ENCODE measurements at regions of chr4 and their contacts with region 1.

Region 1: DNA sequence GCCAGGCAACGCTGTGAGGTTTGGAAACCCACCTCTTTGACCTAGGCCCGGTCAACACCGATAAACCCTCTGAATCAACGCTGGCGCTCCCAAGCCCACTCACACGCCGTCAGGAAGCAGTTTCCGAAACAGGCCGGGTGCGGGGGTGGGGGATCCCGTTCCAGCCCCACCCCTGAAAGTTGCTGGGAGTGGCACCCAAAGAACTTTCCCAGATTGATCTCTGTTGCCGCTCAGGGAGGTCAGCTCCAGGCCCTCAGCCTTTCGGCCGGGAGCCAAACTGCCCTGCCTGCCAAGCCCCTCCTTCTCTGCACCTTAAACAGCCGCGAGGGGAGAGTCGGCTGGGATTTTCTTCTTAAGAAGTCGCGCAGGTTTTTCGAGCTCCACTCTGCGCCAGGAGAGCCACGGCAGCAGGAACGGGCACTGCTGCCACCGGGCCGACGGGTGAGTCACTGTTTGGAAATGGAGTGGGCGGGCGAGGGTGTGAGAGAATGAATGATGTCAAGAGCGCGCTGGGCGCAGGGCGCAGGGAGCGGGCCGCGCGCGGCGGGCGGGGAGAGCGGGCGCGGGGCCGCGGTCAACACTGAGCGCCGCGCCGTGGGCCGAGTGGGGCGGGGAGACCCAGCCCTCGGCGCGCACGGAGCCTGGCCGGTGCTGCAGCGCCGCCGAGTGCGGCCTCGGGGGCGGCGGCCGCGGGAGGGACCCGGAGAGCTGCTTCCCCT is at the start of gene SGMS2:
- DNase-seq: peak; percentile 90
- H3K4me3 ChIP-seq: peak within 1 kb of the TSS; percentile 74 to 89 (median 78)
- H3K27ac ChIP-seq: peak within 1 kb of the TSS; percentile 96 to 98 (median 96)
- H3K4me1 ChIP-seq: peaks cover 7 to 34% (median 21%) of the 10 kb centered on the region in 4 donors
- H3K27me3 ChIP-seq: no peaks in the 10 kb centered on the region
- CTCF ChIP-seq: no peak
- EP300 ChIP-seq: no peak
- POLR2A ChIP-seq: peak; percentile 88
- total RNA-seq, gene SGMS2: 75.8 to 203 (median 122) TPM

Region 2: GRCh38 chr4:107780665-107781064 is 43.8 kb before region 1 on chr4:
- in situ Hi-C with region 1: no loop called
- intact Hi-C with region 1: loop called (anchors 1 kb)
- DNase-seq: no peak
- H3K4me3 ChIP-seq: no peak overlapping the region
- H3K27ac ChIP-seq: no peak overlapping the region
- H3K4me1 ChIP-seq: peaks cover 0 to 7% (median 0%) of the 10 kb centered on the region in 4 donors
- H3K27me3 ChIP-seq: no peaks in the 10 kb centered on the region
- CTCF ChIP-seq: no peak
- EP300 ChIP-seq: no peak
- POLR2A ChIP-seq: no peak

Region 3: GRCh38 chr4:107902715-107903114 is 78.2 kb after region 1 on chr4:
- in situ Hi-C with region 1: no loop called
- intact Hi-C with region 1: loop called (anchors 10 kb)
- DNase-seq: no peak
- H3K4me3 ChIP-seq: no peak overlapping the region
- H3K27ac ChIP-seq: peak overlapping the region in 1 of 4 donors; percentile 67
- H3K4me1 ChIP-seq: peaks cover 0 to 3% (median under 1%) of the 10 kb centered on the region in 4 donors
- H3K27me3 ChIP-seq: no peaks in the 10 kb centered on the region
- CTCF ChIP-seq: no peak
- EP300 ChIP-seq: no peak
- POLR2A ChIP-seq: no peak

Region 4: GRCh38 chr4:108168671-108169523 is 344.4 kb after region 1 on chr4 and contains the start of gene LEF1:
- in situ Hi-C with region 1: no loop called
- intact Hi-C with region 1: no loop called
- DNase-seq: peak; percentile 33
- H3K4me3 ChIP-seq: peak within 1 kb of the TSS; percentile 34 to 66 (median 42)
- H3K27ac ChIP-seq: peak within 1 kb of the TSS in 3 of 4 donors; percentile 1 to 25 (median 6)
- H3K4me1 ChIP-seq: peaks cover 3 to 60% (median 45%) of the 10 kb centered on the region in 4 donors
- H3K27me3 ChIP-seq: peaks cover 100% of the 10 kb centered on the region
- CTCF ChIP-seq: no peak
- EP300 ChIP-seq: no peak
- POLR2A ChIP-seq: no peak
- total RNA-seq, gene LEF1: 1.4 to 29.2 (median 8.7) TPM